GM12878 (cell line): ENCODE measurements at regions of chr6 and their contacts with region 1.

Region 1: DNA sequence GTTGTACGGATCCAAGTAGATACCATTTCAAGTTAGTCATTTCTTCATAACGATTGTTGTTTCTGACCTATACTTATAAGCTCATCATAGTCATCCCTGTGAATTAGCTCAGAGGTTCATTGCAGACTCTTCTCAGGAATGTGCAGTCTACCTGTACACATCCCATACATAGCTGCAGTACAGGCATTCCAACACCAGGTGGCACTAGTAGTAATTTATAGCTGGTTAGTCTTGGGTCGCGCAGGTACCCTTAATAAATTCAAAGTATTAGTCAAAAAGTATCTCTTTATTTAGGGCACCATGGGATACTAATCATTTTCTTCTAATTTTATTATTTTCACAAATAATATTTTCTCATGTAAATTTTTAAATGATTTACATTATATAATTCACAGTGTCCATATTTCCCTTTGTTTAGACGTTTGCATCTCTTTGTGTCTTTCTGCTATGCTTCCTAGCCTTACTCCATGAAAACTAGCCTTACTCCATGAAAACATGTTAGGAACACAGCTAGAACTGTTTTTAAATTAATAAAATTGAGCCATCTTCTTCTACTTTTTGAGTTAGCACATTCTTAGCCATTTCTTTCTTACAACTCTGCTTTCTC is 128.6 kb upstream of the FAM83B start:
- DNase-seq: peak; percentile 20
- ATAC-seq: peak; percentile 93
- H3K4me3 ChIP-seq: no peak overlapping the region
- H3K27ac ChIP-seq: no peak overlapping the region
- H3K4me1 ChIP-seq: no peaks in the 10 kb centered on the region
- H3K27me3 ChIP-seq: no peaks in the 10 kb centered on the region
- CTCF ChIP-seq: peak; percentile 71 to 83 (median 77)
- EP300 ChIP-seq: no peak
- POLR2A ChIP-seq: no peak
- RAD21 ChIP-seq: peak; percentile 71

Region 2: GRCh38 chr6:54586251-54586650 is 131.7 kb before region 1 on chr6:
- CTCF ChIA-PET with region 1: no interaction called
- POLR2A ChIA-PET with region 1: no interaction called
- RAD21 ChIA-PET with region 1: no interaction called
- SMC1A ChIA-PET with region 1: no interaction called
- in situ Hi-C with region 1: no loop called
- intact Hi-C with region 1: no loop called
- DNase-seq: no peak
- ATAC-seq: no peak
- H3K4me3 ChIP-seq: no peak overlapping the region
- H3K27ac ChIP-seq: no peak overlapping the region
- H3K4me1 ChIP-seq: no peaks in the 10 kb centered on the region
- H3K27me3 ChIP-seq: no peaks in the 10 kb centered on the region
- CTCF ChIP-seq: no peak
- EP300 ChIP-seq: no peak
- POLR2A ChIP-seq: no peak
- RAD21 ChIP-seq: no peak

Region 3: DNA sequence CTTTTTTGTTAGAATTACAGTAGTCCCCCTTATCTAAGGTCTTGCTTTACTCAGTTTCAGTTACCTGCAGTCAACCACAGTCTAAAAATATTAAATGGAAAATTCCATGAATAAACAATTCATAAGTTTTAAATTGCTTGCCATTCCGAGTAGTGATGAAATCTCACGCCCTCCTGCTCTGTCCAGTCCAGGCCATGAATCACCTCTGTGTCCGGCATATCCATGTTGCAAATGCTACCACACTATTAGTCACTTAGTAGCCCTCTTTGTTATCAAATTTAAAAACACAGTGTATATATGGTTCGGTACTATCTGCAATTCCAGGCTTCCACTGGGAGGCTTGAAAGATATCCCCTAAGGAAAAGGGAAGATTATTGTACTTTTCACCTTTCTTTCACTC is 36.0 kb before region 1 on chr6:
- CTCF ChIA-PET with region 1: interaction called, 45 read pairs
- POLR2A ChIA-PET with region 1: no interaction called
- RAD21 ChIA-PET with region 1: interaction called, 4 read pairs
- SMC1A ChIA-PET with region 1: interaction called, 15 read pairs
- in situ Hi-C with region 1: no loop called
- intact Hi-C with region 1: no loop called
- DNase-seq: no peak
- ATAC-seq: peak; percentile 34
- H3K4me3 ChIP-seq: no peak overlapping the region
- H3K27ac ChIP-seq: no peak overlapping the region
- H3K4me1 ChIP-seq: no peaks in the 10 kb centered on the region
- H3K27me3 ChIP-seq: no peaks in the 10 kb centered on the region
- CTCF ChIP-seq: no peak
- EP300 ChIP-seq: no peak
- POLR2A ChIP-seq: no peak
- RAD21 ChIP-seq: no peak

Region 4: GRCh38 chr6:54697424-54697823 is 20.5 kb before region 1 on chr6:
- CTCF ChIA-PET with region 1: interaction called, 183 read pairs
- POLR2A ChIA-PET with region 1: no interaction called
- RAD21 ChIA-PET with region 1: interaction called, 28 read pairs
- SMC1A ChIA-PET with region 1: interaction called, 23 read pairs
- in situ Hi-C with region 1: no loop called
- intact Hi-C with region 1: no loop called
- DNase-seq: no peak
- ATAC-seq: no peak
- H3K4me3 ChIP-seq: no peak overlapping the region
- H3K27ac ChIP-seq: no peak overlapping the region
- H3K4me1 ChIP-seq: no peaks in the 10 kb centered on the region
- H3K27me3 ChIP-seq: no peaks in the 10 kb centered on the region
- CTCF ChIP-seq: peak in 2 of 3 experiments; percentile 11 to 37; a peak in 3 of 6 replicates
- EP300 ChIP-seq: no peak
- POLR2A ChIP-seq: no peak
- RAD21 ChIP-seq: peak; percentile 52

Region 5: DNA sequence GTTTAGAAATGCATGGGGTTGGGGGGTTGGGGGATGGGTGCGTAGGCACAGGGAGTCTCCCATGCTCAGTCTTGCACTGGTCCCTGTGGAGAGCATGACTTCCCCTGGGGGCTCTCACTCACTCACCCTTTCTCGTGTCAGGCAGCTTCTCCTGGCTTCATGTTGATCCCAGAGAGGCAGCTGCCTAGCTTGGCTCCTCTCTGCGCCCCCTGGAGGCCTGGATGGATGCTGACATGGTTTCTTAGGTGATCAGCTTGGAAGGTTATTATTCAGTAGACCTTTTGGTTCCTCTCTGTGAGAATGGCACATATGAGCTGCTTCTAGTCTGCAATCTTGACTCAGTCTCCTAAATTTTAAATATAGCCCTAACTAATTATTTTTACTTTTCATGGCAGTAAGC is 19.3 kb after region 1 on chr6:
- CTCF ChIA-PET with region 1: interaction called, 28 read pairs
- POLR2A ChIA-PET with region 1: no interaction called
- RAD21 ChIA-PET with region 1: interaction called, 13 read pairs
- SMC1A ChIA-PET with region 1: interaction called, 10 read pairs
- in situ Hi-C with region 1: no loop called
- intact Hi-C with region 1: no loop called
- DNase-seq: no peak
- ATAC-seq: peak; percentile 76
- H3K4me3 ChIP-seq: no peak overlapping the region
- H3K27ac ChIP-seq: no peak overlapping the region
- H3K4me1 ChIP-seq: no peaks in the 10 kb centered on the region
- H3K27me3 ChIP-seq: no peaks in the 10 kb centered on the region
- CTCF ChIP-seq: peak; percentile 25 to 53 (median 37); a peak in 5 of 6 replicates
- EP300 ChIP-seq: no peak
- POLR2A ChIP-seq: no peak
- RAD21 ChIP-seq: peak; percentile 36; the same call in 1 of the 2 replicates

Region 6: DNA sequence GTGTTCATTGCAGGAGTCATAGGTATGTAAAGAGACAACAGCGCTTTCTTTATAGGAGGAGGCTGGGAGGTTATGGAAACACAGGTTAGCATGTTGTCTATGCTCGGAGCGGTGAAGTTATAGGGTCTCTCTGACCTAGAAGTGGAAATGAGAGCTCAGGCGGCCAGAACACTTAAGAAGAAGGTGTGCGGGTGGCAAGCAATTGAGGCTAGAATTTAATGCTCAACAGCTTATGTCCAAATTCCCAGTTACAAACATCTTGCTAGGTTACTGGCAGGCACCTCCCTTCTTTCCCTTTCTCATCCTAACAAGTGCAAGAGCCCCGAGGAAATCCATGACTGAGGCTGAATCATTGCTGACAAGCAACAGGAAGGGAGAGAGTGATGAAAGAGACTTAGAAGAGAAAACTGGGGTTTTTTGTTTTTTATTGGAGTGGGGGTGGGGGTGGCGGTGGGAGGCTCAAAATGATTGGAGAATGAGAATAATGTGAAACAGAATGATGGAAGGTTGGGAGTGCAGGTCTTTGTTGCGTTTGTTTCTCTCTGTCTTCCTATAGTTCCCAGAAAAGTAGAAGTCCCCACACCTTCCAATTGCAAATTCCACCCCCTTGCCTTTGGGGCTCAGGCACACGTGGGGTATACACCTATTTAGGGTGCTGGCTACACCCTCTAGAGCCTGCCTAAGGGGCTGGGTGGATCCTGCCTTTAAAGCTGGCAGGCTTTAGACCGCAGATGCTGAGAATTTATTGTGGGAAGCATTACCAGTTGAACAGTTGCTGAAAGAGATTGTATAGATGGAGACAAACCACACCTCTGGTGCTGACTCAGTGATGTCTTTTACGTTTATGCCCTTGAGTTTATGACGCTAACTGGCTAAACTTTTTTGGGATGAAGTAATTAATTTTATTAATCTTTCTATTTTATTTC is 130.0 kb after region 1 on chr6:
- CTCF ChIA-PET with region 1: interaction called, 14 read pairs
- POLR2A ChIA-PET with region 1: no interaction called
- RAD21 ChIA-PET with region 1: no interaction called
- SMC1A ChIA-PET with region 1: interaction called, 5 read pairs
- in situ Hi-C with region 1: no loop called
- intact Hi-C with region 1: no loop called
- DNase-seq: no peak
- ATAC-seq: no peak
- H3K4me3 ChIP-seq: no peak overlapping the region
- H3K27ac ChIP-seq: no peak overlapping the region
- H3K4me1 ChIP-seq: no peaks in the 10 kb centered on the region
- H3K27me3 ChIP-seq: no peaks in the 10 kb centered on the region; a peak in 1 of 4 replicates
- CTCF ChIP-seq: no peak
- EP300 ChIP-seq: no peak
- POLR2A ChIP-seq: no peak
- RAD21 ChIP-seq: no peak

Region 7: DNA sequence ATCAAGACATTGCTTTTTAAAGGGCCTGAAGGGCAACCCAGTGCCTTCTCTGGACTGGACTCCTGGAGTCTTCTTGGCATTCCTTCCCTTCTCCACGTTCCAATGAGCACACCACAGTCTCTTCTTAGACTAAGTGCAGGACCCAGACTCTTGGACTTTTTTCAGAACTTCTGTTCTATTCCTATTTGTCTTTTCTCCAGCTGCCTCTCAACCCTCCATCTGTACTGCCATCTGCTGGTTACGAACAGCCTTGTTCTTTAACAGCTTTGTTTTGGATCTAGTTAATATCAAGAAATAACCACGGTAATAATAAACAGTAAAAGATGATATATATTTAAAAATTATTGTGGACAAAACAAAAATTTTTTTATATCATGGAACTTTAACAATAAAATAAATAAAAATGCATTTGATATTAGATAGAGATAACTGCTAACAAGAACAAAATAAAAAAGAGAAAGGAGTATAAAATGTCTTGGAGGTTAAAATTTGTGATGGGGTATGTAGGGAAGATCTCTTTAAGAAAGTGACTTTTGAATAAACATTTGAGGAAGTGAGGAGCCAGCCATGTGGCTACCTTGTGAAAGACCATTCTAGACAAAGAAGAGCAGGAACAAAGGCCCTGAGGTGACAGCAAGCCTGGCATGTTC is 351.3 kb after region 1 on chr6:
- CTCF ChIA-PET with region 1: interaction called, 10 read pairs
- POLR2A ChIA-PET with region 1: no interaction called
- RAD21 ChIA-PET with region 1: interaction called, 15 read pairs
- SMC1A ChIA-PET with region 1: interaction called, 4 read pairs
- in situ Hi-C with region 1: no loop called
- intact Hi-C with region 1: loop called (anchors 1 kb)
- DNase-seq: no peak
- ATAC-seq: peak; percentile 58
- H3K4me3 ChIP-seq: no peak overlapping the region
- H3K27ac ChIP-seq: no peak overlapping the region
- H3K4me1 ChIP-seq: no peaks in the 10 kb centered on the region
- H3K27me3 ChIP-seq: no peaks in the 10 kb centered on the region
- CTCF ChIP-seq: peak; percentile 50 to 57 (median 54); a peak in 5 of 6 replicates
- EP300 ChIP-seq: no peak
- POLR2A ChIP-seq: no peak
- RAD21 ChIP-seq: peak; percentile 87